AG04449 (cell line): ENCODE measurements at regions of chr6 and their contacts with region 1.

Region 1: GRCh38 chr6:75208298-75209183 is 2.7 kb upstream of the COL12A1 start:
- DNase-seq: no peak
- H3K4me3 ChIP-seq: peak overlapping the region; percentile 6
- CTCF ChIP-seq: peak; percentile 79

Region 2: DNA sequence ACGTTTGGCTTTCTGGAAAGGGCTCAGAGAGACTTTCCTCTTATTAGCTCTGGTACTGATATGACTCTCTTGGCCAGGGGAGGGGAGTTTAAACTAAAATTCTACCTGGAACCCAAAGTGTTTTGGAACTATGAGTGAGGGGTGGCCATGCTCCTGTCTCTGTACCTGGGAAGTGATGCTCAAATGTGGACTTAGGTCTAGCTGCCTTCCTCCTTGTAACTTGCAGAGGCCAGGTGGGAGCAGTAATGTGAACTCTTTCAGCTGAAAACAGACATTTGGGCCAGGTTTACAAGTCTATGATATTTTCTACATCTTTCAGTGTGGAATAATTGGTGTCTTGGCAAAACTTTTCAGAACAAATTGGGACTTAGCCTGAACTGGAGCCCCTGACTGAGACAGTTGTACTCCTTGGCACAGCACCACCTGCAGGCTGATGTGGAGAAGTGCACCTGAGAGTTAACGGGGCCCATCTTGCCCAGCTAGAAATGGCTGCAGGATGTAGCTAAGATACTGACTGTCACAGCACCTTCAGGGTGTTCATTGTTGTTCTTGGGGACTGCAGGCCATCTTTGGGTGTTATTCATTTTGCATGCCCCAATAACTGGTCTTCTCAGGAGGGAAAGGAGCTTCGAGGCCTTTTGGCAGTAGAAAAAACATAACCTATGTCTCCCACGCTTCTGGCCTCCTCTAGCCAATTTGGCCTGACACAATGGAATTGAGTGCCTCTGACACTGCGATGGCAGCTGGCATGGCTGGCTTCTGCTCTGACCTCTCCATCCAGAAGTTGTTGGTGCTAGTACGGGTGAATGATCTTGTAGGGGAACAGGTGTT is 1475.5 kb before region 1 on chr6:
- CTCF ChIA-PET with region 1: interaction called, 210 read pairs
- POLR2A ChIA-PET with region 1: no interaction called
- DNase-seq: no peak
- H3K4me3 ChIP-seq: no peak overlapping the region
- CTCF ChIP-seq: peak; percentile 93

Region 3: DNA sequence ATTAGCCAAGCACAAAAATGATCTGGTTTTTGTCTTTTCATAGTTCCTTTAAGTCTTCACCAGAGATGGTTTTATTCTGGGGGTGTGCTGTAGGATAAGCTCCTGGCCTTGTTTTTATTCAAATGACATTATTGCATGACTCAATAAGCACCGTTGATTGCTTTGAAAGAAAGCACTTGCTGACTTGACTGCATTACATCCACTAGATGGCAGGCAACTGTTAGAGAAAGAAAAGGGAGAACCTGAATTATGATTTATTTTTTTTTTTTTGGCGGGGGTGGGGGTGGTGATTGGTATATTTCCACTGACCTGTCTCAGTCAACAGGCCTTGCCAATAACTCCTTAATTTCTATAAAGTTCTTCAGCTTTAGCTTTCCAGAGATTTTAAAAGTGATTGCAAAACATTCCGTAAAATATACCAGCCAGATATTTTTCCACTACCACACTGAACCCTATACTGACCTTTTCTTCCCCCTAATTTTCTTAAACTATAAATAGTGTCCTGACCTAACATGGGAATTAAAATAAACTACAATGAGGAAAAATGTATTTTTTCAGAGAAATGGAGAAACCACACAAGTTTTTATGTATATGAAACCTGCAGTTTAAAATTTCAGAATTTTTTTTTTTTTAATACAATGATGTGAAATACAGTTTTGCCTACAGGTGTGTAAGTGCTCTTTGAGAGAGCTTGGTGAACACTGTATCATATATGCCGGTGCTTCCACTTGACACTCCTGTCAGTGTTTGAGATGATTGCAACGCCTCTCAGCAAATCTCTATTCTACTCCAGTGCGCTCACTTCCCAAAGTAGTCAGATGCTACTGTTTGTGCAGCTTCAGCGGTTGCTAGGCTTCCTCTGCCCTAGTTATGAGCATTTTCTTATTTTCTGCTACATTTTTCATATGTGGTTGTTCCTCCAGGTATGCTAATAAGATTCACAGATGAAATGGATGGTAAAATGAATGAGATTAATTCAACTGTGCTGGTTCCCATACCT is 1238.3 kb before region 1 on chr6:
- CTCF ChIA-PET with region 1: interaction called, 77 read pairs
- POLR2A ChIA-PET with region 1: no interaction called
- DNase-seq: no peak
- H3K4me3 ChIP-seq: no peak overlapping the region
- CTCF ChIP-seq: peak; percentile 47

Region 4: GRCh38 chr6:74100719-74101287 is 1107.7 kb before region 1 on chr6:
- CTCF ChIA-PET with region 1: interaction called, 11 read pairs
- POLR2A ChIA-PET with region 1: no interaction called
- DNase-seq: no peak
- H3K4me3 ChIP-seq: no peak overlapping the region
- CTCF ChIP-seq: no peak

Region 5: GRCh38 chr6:75081921-75082320 is 126.6 kb before region 1 on chr6:
- CTCF ChIA-PET with region 1: interaction called, 10 read pairs
- POLR2A ChIA-PET with region 1: no interaction called
- DNase-seq: no peak
- H3K4me3 ChIP-seq: no peak overlapping the region
- CTCF ChIP-seq: no peak

Region 6: GRCh38 chr6:75546381-75546780 is 337.8 kb after region 1 on chr6:
- CTCF ChIA-PET with region 1: interaction called, 11 read pairs
- POLR2A ChIA-PET with region 1: no interaction called
- DNase-seq: no peak
- H3K4me3 ChIP-seq: no peak overlapping the region
- CTCF ChIP-seq: no peak